CD4-positive, alpha-beta T cell (primary cell): ENCODE measurements at regions of chr2 and their contacts with region 1.

Region 1: DNA sequence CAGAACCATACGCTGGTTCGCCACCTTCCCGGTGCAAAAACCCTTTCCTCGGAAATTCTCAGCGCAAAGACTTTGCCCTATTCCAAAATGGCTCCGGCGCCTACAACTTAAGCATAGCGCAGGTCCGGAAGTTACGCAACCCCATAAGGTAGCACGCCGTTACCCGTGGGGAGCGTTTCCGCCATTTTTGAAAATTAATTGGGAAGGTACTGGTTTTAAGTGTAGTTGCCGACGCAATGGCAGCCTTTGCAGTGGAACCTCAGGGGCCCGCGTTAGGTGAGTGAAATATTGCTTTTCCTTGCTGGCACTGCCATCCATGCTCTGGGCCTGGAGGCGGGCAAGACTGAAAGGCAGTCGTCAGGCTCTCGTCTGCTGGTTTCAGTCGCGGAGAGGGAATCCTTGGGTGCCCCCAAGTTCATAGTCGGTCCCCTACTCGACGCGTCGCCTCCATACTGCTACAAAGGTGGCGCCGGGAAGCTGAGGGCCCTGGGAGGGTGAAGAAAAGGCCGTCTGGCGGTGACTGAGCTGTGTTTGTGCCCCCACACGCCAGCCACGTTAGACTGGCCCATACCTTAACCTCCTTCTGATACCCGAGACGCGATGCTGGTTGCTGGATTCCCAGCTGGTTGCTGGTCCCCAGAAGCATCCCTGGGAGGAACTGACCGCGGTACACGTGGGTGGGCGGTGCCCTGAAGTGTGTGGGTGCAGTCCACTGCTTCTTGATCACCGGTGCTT is at the start of gene NUP35:
- DNase-seq: peak; percentile 76 to 92 (median 80)
- ATAC-seq: peak; percentile 94
- H3K4me3 ChIP-seq: peak within 1 kb of the TSS; percentile 90
- H3K4me3 Mint-ChIP-seq: peak within 1 kb of the TSS; percentile 96
- H3K27ac ChIP-seq: peak within 1 kb of the TSS; percentile 76 to 95
- H3K27ac Mint-ChIP-seq: peak within 1 kb of the TSS; percentile 99
- H3K4me1 ChIP-seq: peaks cover 12% of the 10 kb centered on the region
- H3K4me1 Mint-ChIP-seq: peaks cover 47% of the 10 kb centered on the region
- H3K27me3 ChIP-seq: no peaks in the 10 kb centered on the region
- H3K27me3 Mint-ChIP-seq: peaks cover 12% of the 10 kb centered on the region
- CTCF ChIP-seq: no peak
- total RNA-seq, gene NUP35: 12.5 to 13.1 TPM

Region 2: GRCh38 chr2:183038341-183039300 is 85.8 kb before region 1 on chr2 and contains the start of gene NCKAP1:
- CTCF ChIA-PET with region 1: no interaction called
- POLR2A ChIA-PET with region 1: interaction called, 5 read pairs
- intact Hi-C with region 1: loop called in 1 of 2 experiments (anchors 2 kb)
- DNase-seq: peak; percentile 63 to 91 (median 81)
- ATAC-seq: peak; percentile 85
- H3K4me3 ChIP-seq: peak within 1 kb of the TSS; percentile 65
- H3K4me3 Mint-ChIP-seq: peak within 1 kb of the TSS; percentile 91
- H3K27ac ChIP-seq: no peak within 1 kb of the TSS
- H3K27ac Mint-ChIP-seq: peak within 1 kb of the TSS; percentile 40
- H3K4me1 ChIP-seq: peaks cover 15% of the 10 kb centered on the region
- H3K4me1 Mint-ChIP-seq: peaks cover 39% of the 10 kb centered on the region
- H3K27me3 ChIP-seq: peaks cover 3 to 55% of the 10 kb centered on the region in 2 experiments
- H3K27me3 Mint-ChIP-seq: peaks cover 32% of the 10 kb centered on the region
- CTCF ChIP-seq: peak; percentile 64
- total RNA-seq, gene NCKAP1: 2.4 to 2.5 TPM

Region 3: GRCh38 chr2:183078465-183079138 is 45.8 kb before region 1 on chr2 and contains the start of gene DUSP19:
- CTCF ChIA-PET with region 1: no interaction called
- POLR2A ChIA-PET with region 1: interaction called, 21 read pairs
- intact Hi-C with region 1: loop called (anchors 1 to 5 kb)
- DNase-seq: peak; percentile 57 to 90 (median 74)
- ATAC-seq: peak; percentile 75
- H3K4me3 ChIP-seq: peak within 1 kb of the TSS; percentile 76
- H3K4me3 Mint-ChIP-seq: peak within 1 kb of the TSS; percentile 93
- H3K27ac ChIP-seq: no peak within 1 kb of the TSS
- H3K27ac Mint-ChIP-seq: peak within 1 kb of the TSS; percentile 64
- H3K4me1 ChIP-seq: peaks cover 6% of the 10 kb centered on the region
- H3K4me1 Mint-ChIP-seq: peaks cover 13% of the 10 kb centered on the region
- H3K27me3 ChIP-seq: no peaks in the 10 kb centered on the region
- H3K27me3 Mint-ChIP-seq: no peaks in the 10 kb centered on the region
- CTCF ChIP-seq: no peak
- total RNA-seq, gene DUSP19: 0.14 to 0.50 TPM